Heart right ventricle (tissue), 16 donors: ENCODE measurements at regions of chr3 and their contacts with region 1.

Region 1: DNA sequence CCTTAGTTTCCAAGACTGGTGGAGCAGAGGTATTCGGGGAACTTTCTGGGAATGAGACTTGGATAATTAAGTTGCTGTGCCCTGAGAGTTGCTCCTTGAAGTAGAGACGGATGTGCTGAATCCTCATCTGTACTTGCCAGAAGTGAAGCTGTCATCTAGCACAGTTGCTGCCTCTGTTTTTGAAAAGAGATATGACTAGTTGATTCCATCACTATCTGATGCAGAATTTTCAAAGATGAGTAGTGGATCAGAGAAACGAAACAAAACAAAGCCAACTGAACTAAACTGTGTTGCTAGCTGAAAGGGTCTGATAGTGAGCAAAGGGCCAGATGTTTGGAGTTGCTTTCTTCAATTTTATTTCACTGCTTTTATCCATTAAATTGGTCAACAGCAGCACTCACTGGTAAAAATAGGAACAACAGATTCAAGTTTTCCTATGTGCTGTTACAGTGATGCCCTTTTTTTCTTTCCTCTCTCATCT is 52.7 kb downstream of the MITF start:
- DNase-seq: no peak
- ATAC-seq: peak; percentile 45 to 85 (median 64)
- H3K4me3 ChIP-seq: peak overlapping the region in 3 of 10 donors; percentile 1 to 14 (median 2)
- H3K27ac ChIP-seq: peak overlapping the region in 8 of 10 donors; percentile 1 to 72 (median 64)
- H3K4me1 ChIP-seq: peaks cover 3 to 47% (median 36%) of the 10 kb centered on the region in 9 donors
- H3K27me3 ChIP-seq: no peaks in the 10 kb centered on the region
- CTCF ChIP-seq: peak in 8 of 9 donors; percentile 31 to 68 (median 58)

Region 2: DNA sequence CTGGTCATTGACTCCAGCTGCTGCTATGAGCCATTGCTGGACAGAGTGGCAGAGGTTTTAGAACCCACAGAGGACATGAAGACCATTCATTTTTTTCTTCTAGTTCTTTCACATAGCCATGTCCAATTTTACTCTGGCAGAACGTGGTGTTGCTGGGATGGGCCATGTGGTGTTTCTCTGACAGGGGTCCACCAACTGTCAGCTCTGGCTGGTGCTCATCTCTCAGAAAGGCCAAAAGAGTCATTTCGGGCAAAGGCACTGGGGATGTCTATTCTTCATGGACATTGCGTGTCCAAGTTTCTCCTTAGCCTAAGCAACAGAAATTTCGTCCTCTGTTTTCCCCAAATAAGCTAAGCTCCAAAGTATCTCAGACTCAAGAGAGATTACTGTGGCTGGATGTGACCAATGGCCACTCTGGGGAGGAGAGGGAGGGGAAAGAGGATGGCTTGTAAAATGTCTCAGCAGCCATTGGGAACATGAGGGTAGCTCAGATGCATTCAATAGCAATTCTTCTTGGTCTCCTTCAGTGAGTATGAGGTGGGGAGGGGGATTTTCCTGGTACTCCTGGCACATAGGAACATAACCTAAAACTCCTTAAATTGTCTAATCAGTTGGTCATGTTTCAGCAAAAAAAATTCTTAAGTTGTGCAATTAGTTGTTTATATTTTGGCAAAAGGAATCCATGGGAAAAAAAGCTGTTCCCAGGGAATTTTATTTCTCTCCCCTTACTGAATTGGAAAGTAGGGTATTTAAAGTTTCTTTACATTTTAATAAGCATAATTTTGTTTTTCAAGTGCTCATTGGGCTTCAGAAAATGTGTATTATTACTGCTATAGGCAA is 184.3 kb before region 1 on chr3:
- intact Hi-C with region 1: no loop called
- DNase-seq: no peak
- ATAC-seq: peak in 2 of 8 donors; percentile 16 to 31
- H3K4me3 ChIP-seq: no peak overlapping the region
- H3K27ac ChIP-seq: no peak overlapping the region
- H3K4me1 ChIP-seq: no peaks in the 10 kb centered on the region
- H3K27me3 ChIP-seq: no peaks in the 10 kb centered on the region
- CTCF ChIP-seq: no peak

Region 3: GRCh38 chr3:69682878-69683806 is 108.8 kb before region 1 on chr3:
- intact Hi-C with region 1: loop called in 1 of 10 experiments (anchors 5 kb)
- DNase-seq: no peak
- ATAC-seq: no peak
- H3K4me3 ChIP-seq: no peak overlapping the region
- H3K27ac ChIP-seq: no peak overlapping the region
- H3K4me1 ChIP-seq: peaks cover 0 to 5% (median 0%) of the 10 kb centered on the region in 9 donors
- H3K27me3 ChIP-seq: no peaks in the 10 kb centered on the region
- CTCF ChIP-seq: no peak

Region 4: DNA sequence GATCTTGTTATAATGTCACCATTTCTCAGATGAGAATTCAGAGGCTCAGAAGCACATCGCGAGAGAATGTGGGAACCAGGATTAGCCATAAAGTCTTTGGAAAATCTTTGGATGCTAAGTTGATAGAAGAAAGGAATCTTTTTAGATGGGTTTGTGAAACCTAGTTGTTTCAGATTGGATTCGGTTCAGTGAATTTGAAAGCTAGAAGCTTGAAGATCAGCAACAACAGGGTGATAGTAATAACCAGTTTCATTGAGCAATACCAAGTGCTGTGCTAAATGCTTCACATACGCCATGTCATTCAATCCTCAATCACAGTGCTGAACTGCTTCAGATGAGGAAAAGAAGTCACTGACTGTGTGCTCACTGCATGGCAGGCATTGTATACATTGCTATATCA is 100.1 kb before region 1 on chr3:
- intact Hi-C with region 1: loop called (anchors 1 to 10 kb)
- DNase-seq: no peak
- ATAC-seq: no peak
- H3K4me3 ChIP-seq: no peak overlapping the region
- H3K27ac ChIP-seq: no peak overlapping the region
- H3K4me1 ChIP-seq: peaks cover 0 to 10% (median 3%) of the 10 kb centered on the region in 9 donors
- H3K27me3 ChIP-seq: peaks cover 0 to 3% (median 0%) of the 10 kb centered on the region in 7 donors
- CTCF ChIP-seq: no peak

Region 5: DNA sequence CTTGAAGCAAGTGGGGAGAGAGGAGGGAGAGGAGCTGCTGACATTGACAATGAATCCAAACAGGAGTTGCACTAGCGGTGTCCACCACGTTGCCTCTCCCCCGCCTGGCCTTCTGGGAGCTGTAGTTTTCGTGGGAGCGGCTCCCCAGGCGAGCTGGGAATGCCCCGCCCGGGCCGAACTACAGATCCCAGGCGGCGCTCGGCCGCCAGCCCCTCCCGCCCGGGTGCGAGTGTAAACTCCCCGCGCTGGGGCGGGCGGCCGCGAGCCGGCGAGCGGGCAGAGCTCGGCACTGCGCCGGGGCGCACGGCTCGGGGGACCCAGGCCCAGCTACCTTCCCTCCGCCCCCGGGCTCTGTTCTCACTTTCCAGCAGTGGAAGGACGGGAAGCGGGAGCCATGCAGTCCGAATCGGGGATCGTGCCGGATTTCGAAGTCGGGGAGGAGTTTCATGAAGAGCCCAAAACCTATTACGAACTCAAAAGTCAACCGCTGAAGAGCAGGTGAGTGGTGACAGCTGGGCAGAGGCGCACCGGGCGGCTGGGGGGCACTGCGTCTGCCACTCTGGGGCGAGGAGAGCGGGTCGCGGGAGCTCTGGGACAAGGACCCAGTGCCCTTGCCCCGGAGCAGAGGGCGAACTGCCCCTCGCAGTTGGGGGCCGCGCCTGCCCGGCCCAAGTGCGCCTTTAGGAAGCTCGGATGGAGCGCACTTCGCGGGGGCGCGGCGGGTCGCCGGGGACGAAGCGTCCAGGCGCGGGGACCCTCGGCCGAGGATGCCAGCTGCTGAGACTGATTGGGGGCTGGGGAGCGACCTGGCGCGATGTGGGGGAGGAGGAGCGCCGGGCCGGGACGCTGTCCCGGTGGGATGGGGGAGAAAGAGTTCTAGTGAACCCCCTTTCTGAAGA is 52.5 kb before region 1 on chr3 and contains the start of gene MITF:
- intact Hi-C with region 1: loop called in 5 of 10 experiments (anchors 5 kb)
- DNase-seq: peak; percentile 92 to 94
- ATAC-seq: peak; percentile 96 to 99 (median 98)
- H3K4me3 ChIP-seq: peak within 1 kb of the TSS; percentile 76 to 98 (median 92)
- H3K27ac ChIP-seq: peak within 1 kb of the TSS; percentile 84 to 96 (median 92)
- H3K4me1 ChIP-seq: peaks cover 0 to 55% (median 14%) of the 10 kb centered on the region in 9 donors
- H3K27me3 ChIP-seq: peaks cover 0 to 6% (median 0%) of the 10 kb centered on the region in 7 donors
- CTCF ChIP-seq: no peak
- total RNA-seq, gene MITF: 53.7 to 101 (median 87.0) TPM

Region 6: DNA sequence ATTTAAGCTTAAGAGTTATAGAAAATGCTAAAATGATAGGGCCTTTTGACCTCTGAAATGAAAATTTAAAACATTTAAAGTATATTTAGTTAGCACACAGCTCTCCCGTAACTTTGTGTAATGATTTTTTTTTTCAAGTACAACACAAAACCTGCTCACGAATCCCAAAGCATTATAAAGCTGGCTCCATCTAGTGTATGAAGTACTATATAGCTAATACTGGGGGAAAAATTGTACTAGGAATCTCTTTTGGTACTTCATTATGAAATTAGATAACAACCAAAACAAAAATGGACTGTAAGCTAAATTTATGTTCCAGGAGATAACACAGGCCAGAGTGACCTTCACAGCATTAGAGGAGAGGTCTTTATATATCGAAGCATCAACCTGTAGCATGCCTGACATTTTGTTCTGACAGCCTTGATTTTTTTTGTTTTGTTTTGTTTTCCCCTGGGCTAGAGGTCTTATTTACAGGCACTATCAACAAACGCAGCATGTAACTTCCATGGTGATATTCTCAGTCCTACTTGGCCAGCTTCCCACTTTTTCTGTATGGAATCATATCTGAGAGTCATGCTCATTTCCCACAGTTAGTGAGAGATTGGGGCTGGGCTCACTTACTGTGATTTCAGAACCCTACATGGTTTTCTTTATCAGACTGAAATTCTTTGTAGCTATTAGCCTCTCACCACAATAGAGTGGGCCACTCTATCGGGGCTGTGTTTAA is 63.6 kb after region 1 on chr3:
- intact Hi-C with region 1: loop called in 4 of 10 experiments (anchors 5 to 10 kb)
- DNase-seq: no peak
- ATAC-seq: peak in 7 of 8 donors; percentile 44 to 78 (median 54)
- H3K4me3 ChIP-seq: no peak overlapping the region
- H3K27ac ChIP-seq: peak overlapping the region in 6 of 10 donors; percentile 2 to 61 (median 53)
- H3K4me1 ChIP-seq: peaks cover 0 to 56% (median 28%) of the 10 kb centered on the region in 9 donors
- H3K27me3 ChIP-seq: no peaks in the 10 kb centered on the region
- CTCF ChIP-seq: peak in 7 of 9 donors; percentile 43 to 71 (median 56)

Region 7: DNA sequence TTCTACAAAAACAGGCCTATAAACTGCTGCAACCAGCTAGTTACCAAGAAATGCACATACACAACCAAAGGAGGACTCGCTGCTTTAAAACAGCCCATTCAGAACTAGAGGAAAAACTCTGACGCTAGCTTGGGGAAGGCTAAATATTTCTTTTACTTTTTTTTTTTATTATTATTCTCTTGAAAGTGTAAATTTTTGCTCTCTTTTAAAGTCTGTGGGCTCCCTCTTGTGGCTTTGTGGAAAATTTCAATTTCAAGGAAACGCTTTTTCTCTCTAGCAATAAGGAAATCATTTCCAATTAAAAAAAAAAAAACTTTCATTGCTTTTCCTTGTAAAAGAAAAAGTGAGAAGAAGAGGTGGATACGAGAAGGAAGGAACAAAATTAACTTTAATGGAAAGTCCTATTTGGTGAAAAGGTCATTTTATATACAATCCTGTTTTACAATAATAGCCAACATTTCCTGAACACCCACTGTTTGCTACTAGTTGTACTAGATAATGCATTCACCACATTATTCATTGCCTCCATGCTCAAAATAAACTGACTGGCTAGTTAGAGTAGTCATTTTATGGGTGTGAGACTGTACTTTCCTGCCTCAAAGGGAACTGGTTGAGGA is 156.4 kb after region 1 on chr3:
- intact Hi-C with region 1: loop called in 1 of 10 experiments (anchors 5 kb)
- DNase-seq: no peak
- ATAC-seq: peak in 1 of 8 donors; percentile 17
- H3K4me3 ChIP-seq: no peak overlapping the region
- H3K27ac ChIP-seq: no peak overlapping the region
- H3K4me1 ChIP-seq: peaks cover 0 to 15% (median 0%) of the 10 kb centered on the region in 9 donors
- H3K27me3 ChIP-seq: no peaks in the 10 kb centered on the region
- CTCF ChIP-seq: peak; percentile 38 to 77 (median 66)